Activated CD4-positive, alpha-beta T cell treated with anti-CD3 and anti-CD28 coated beads for 36 hours (primary cell): ENCODE measurements at regions of chr10 and their contacts with region 1.

Region 1: GRCh38 chr10:62422068-62422590 is 48.0 kb downstream of the ZNF365 start:
- DNase-seq: no peak
- ATAC-seq: no peak
- H3K4me3 Mint-ChIP-seq: no peak overlapping the region
- H3K27ac Mint-ChIP-seq: no peak overlapping the region
- H3K4me1 Mint-ChIP-seq: peaks cover 23% of the 10 kb centered on the region
- H3K27me3 Mint-ChIP-seq: peaks cover 10% of the 10 kb centered on the region

Region 2: GRCh38 chr10:61882621-61883373 is 539.3 kb before region 1 on chr10:
- CTCF ChIA-PET with region 1: no interaction called
- POLR2A ChIA-PET with region 1: no interaction called
- intact Hi-C with region 1: loop called in 1 of 2 experiments (anchors 5 kb)
- DNase-seq: peak; percentile 86
- ATAC-seq: peak; percentile 96
- H3K4me3 Mint-ChIP-seq: no peak overlapping the region
- H3K27ac Mint-ChIP-seq: peak overlapping the region; percentile 87
- H3K4me1 Mint-ChIP-seq: peaks cover 31% of the 10 kb centered on the region
- H3K27me3 Mint-ChIP-seq: no peaks in the 10 kb centered on the region

Region 3: DNA sequence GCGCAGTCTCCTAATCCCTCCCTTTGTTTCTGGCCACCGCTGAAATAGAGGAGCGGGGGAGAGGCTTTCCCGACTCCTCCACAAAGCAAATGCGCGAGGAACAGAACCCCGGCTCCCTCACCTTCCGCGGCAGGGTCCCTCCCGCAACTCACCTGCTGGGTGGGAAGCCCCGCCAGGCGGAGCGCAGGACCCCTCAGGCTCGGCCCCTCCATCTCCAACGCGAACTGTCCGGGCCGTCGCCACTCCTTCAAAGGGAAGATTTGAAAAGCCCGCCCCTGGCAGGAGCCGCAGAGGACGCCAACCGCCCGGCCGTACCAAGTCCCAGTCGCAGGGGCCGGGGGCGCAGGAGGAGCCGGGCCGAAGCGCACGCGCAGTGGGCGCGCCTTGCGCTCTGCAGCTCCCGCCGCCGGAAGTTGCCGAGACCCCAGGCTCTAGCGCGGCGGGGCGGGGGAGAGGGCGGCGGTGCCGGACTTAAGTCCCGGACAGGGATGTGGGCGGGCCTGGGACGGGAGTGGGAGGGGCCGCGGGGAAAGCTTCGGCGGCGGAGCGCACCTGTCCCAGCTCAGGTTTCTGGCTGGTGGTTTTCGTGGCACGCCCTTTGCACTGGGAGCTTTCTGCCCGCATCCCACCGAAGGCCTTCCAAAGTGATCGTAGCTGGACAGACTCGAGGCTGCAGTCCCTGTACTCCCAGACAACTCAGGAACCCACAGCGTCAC is 153.6 kb before region 1 on chr10 and contains the start of gene RTKN2:
- CTCF ChIA-PET with region 1: interaction called, 5 read pairs
- POLR2A ChIA-PET with region 1: no interaction called
- intact Hi-C with region 1: loop called in 1 of 2 experiments (anchors 2 kb)
- DNase-seq: peak; percentile 83
- ATAC-seq: peak; percentile 88
- H3K4me3 Mint-ChIP-seq: peak within 1 kb of the TSS; percentile 82
- H3K27ac Mint-ChIP-seq: peak within 1 kb of the TSS; percentile 51
- H3K4me1 Mint-ChIP-seq: peaks cover 14% of the 10 kb centered on the region
- H3K27me3 Mint-ChIP-seq: peaks cover 31% of the 10 kb centered on the region
- total RNA-seq, gene RTKN2: 4.8 TPM

Region 4: GRCh38 chr10:62437696-62438095 is 15.6 kb after region 1 on chr10:
- CTCF ChIA-PET with region 1: interaction called, 13 read pairs
- POLR2A ChIA-PET with region 1: no interaction called
- intact Hi-C with region 1: no loop called
- DNase-seq: no peak
- ATAC-seq: no peak
- H3K4me3 Mint-ChIP-seq: no peak overlapping the region
- H3K27ac Mint-ChIP-seq: no peak overlapping the region
- H3K4me1 Mint-ChIP-seq: peaks cover 19% of the 10 kb centered on the region
- H3K27me3 Mint-ChIP-seq: peaks cover 20% of the 10 kb centered on the region

Region 5: DNA sequence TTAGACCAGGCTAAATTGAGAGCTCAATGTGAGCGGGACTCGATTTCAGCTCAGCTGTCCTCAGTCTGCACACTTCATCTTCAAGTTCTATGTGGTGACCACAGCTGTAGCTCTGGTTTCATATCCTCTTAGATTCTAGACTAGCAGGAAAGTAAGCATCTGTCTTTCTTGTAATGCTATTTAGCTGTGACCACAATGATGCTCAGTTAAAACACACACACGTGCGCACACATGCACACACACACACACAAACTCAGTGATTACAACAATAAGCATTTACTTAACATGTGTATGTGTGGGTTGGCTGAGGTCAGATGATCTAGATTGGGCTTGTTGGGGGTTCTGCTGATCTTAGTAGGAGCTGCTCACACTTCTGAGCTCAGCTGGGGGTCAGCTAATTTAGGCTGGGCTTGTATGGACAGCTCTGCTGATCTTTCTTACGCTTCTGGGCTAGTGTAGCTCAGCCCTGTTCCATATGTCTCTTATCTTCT is 34.5 kb after region 1 on chr10:
- CTCF ChIA-PET with region 1: no interaction called
- POLR2A ChIA-PET with region 1: no interaction called
- intact Hi-C with region 1: no loop called
- DNase-seq: no peak
- ATAC-seq: no peak
- H3K4me3 Mint-ChIP-seq: no peak overlapping the region
- H3K27ac Mint-ChIP-seq: no peak overlapping the region
- H3K4me1 Mint-ChIP-seq: peaks cover 3% of the 10 kb centered on the region
- H3K27me3 Mint-ChIP-seq: peaks cover 3% of the 10 kb centered on the region